ENCODE measurements at regions of chr17 and their contacts with region 1.

Region 1: GRCh38 chr17:31008374-31009041 is 37.7 kb downstream of the RNF135 start:
- DNase-seq: peak; percentile 52 to 85 (median 63)
- ATAC-seq: peak; percentile 49 to 89 (median 84)
- H3K4me3 ChIP-seq: peak overlapping the region; percentile 53 to 87 (median 75)
- H3K27ac ChIP-seq: peak overlapping the region; percentile 44 to 90 (median 77)
- H3K4me1 ChIP-seq: peaks cover 0 to 23% (median 6%) of the 10 kb centered on the region in 12 donors
- H3K27me3 ChIP-seq: no peaks in the 10 kb centered on the region
- CTCF ChIP-seq: peak in 1 of 12 donors; percentile 5
- POLR2A ChIP-seq: no peak

Region 2: GRCh38 chr17:31085563-31085962 is 77.1 kb after region 1 on chr17:
- intact Hi-C with region 1: loop called in 1 of 10 experiments (anchors 10 kb)
- DNase-seq: no peak
- ATAC-seq: peak in 2 of 4 donors; percentile 79 to 87
- H3K4me3 ChIP-seq: no peak overlapping the region
- H3K27ac ChIP-seq: no peak overlapping the region
- H3K4me1 ChIP-seq: no peaks in the 10 kb centered on the region
- H3K27me3 ChIP-seq: no peaks in the 10 kb centered on the region
- CTCF ChIP-seq: no peak
- POLR2A ChIP-seq: no peak

Region 3: DNA sequence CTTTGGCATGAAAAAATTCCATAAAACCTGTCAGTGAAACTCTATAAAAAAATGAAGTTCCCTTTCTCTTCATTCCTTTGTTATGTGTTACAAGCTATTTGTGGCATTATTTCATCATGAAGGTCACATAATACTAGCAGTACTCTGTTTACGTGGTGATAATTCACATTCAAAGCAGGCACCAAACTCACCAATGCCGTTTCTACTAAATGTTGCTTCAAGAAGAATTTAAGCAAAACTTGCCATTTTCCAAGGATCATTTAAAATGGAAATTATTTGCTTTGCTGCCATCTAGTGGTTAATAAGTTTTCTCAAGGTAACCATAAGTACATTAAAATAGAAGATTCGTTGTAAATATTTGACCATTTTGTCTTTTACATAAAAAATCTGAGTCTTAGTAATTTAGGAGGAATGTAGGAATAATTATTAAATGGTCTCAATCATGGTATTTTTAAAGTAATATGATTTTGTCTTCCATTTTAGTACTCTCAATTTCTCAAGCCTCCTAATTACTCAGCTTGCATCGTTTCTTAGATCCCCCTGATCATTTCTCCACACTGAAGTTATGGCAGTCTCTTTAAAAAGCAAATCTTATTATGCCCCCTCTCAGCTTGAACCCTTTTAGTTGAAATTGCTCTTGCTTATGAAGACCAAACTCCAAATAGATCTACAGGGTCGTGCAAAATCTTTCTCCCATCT is 207.7 kb after region 1 on chr17:
- intact Hi-C with region 1: loop called in 4 of 10 experiments (anchors 1 to 2 kb)
- DNase-seq: no peak
- ATAC-seq: no peak
- H3K4me3 ChIP-seq: no peak overlapping the region
- H3K27ac ChIP-seq: peak overlapping the region in 1 of 12 donors; percentile 19
- H3K4me1 ChIP-seq: peaks cover 0 to 10% (median 1%) of the 10 kb centered on the region in 12 donors
- H3K27me3 ChIP-seq: no peaks in the 10 kb centered on the region
- CTCF ChIP-seq: peak; percentile 47 to 79 (median 69)
- POLR2A ChIP-seq: no peak

Measured in heart left ventricle (tissue), 16 donors.